ENCODE measurements at regions of chr6 and their contacts with region 1.

Region 1: GRCh38 chr6:168660400-168660945 is 219.5 kb downstream of the SMOC2 start:
- DNase-seq: peak in 1 of 2 donors; percentile 31
- H3K4me3 ChIP-seq: no peak overlapping the region
- CTCF ChIP-seq: no peak
- POLR2A ChIP-seq: no peak

Region 2: GRCh38 chr6:168648240-168649125 is 12.0 kb before region 1 on chr6:
- intact Hi-C with region 1: loop called (anchors 1 kb)
- DNase-seq: no peak
- H3K4me3 ChIP-seq: no peak overlapping the region
- CTCF ChIP-seq: no peak
- POLR2A ChIP-seq: no peak

Measured in lower leg skin (tissue), 4 donors.